ENCODE measurements at regions of chr6 and their contacts with region 1.

Region 1: DNA sequence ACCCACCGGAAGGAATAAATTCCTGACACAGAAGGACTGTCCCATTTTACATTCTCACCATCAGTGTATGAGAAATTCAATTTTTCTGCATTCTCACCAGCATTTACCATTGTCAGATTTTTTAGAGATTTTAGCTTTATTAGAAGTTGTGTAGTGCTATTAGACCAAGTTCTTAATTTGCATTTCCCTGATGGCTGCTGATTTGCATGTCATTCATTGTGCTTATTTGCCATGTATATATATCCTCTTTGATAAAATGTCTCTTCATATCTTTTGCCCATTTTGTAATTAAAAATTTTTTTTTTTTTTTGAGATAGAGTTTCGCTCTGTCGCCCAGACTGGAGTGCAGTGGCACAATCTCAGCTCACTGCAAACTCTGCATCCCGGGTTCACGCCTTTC is 9.8 kb upstream of the HLA-DRB5 start:
- DNase-seq: no peak
- ATAC-seq: no peak
- H3K4me3 ChIP-seq: no peak overlapping the region
- H3K4me3 Mint-ChIP-seq: no peak overlapping the region
- H3K27ac ChIP-seq: no peak overlapping the region
- H3K27ac Mint-ChIP-seq: no peak overlapping the region
- H3K4me1 ChIP-seq: no peaks in the 10 kb centered on the region
- H3K4me1 Mint-ChIP-seq: no peaks in the 10 kb centered on the region
- H3K27me3 ChIP-seq: no peaks in the 10 kb centered on the region
- H3K27me3 Mint-ChIP-seq: peaks cover 0 to 35% (median 0%) of the 10 kb centered on the region in 5 donors

Region 2: GRCh38 chr6:32491700-32492099 is 48.1 kb before region 1 on chr6:
- CTCF ChIA-PET with region 1: no interaction called
- POLR2A ChIA-PET with region 1: no interaction called
- intact Hi-C with region 1: loop called in 1 of 2 experiments (anchors 2 kb)
- DNase-seq: no peak
- ATAC-seq: no peak
- H3K4me3 ChIP-seq: no peak overlapping the region
- H3K4me3 Mint-ChIP-seq: no peak overlapping the region
- H3K27ac ChIP-seq: no peak overlapping the region
- H3K27ac Mint-ChIP-seq: no peak overlapping the region
- H3K4me1 ChIP-seq: no peaks in the 10 kb centered on the region
- H3K4me1 Mint-ChIP-seq: no peaks in the 10 kb centered on the region
- H3K27me3 ChIP-seq: no peaks in the 10 kb centered on the region
- H3K27me3 Mint-ChIP-seq: peaks cover 0 to 29% (median 0%) of the 10 kb centered on the region in 5 donors

Region 3: GRCh38 chr6:32501016-32501415 is 38.8 kb before region 1 on chr6:
- CTCF ChIA-PET with region 1: no interaction called
- POLR2A ChIA-PET with region 1: no interaction called
- intact Hi-C with region 1: loop called in 1 of 2 experiments (anchors 1 kb)
- DNase-seq: no peak
- ATAC-seq: no peak
- H3K4me3 ChIP-seq: no peak overlapping the region
- H3K4me3 Mint-ChIP-seq: no peak overlapping the region
- H3K27ac ChIP-seq: no peak overlapping the region
- H3K27ac Mint-ChIP-seq: no peak overlapping the region
- H3K4me1 ChIP-seq: no peaks in the 10 kb centered on the region
- H3K4me1 Mint-ChIP-seq: peaks cover 0 to 4% (median 0%) of the 10 kb centered on the region in 7 donors
- H3K27me3 ChIP-seq: no peaks in the 10 kb centered on the region
- H3K27me3 Mint-ChIP-seq: peaks cover 0 to 26% (median 5%) of the 10 kb centered on the region in 5 donors

Region 4: GRCh38 chr6:32551410-32551809 is 11.6 kb after region 1 on chr6:
- CTCF ChIA-PET with region 1: no interaction called
- POLR2A ChIA-PET with region 1: no interaction called
- intact Hi-C with region 1: no loop called
- DNase-seq: no peak
- ATAC-seq: no peak
- H3K4me3 ChIP-seq: no peak overlapping the region
- H3K4me3 Mint-ChIP-seq: no peak overlapping the region
- H3K27ac ChIP-seq: no peak overlapping the region
- H3K27ac Mint-ChIP-seq: no peak overlapping the region
- H3K4me1 ChIP-seq: no peaks in the 10 kb centered on the region
- H3K4me1 Mint-ChIP-seq: peaks cover 0 to 3% (median 0%) of the 10 kb centered on the region in 7 donors
- H3K27me3 ChIP-seq: no peaks in the 10 kb centered on the region
- H3K27me3 Mint-ChIP-seq: peaks cover 0 to 18% (median 4%) of the 10 kb centered on the region in 5 donors